ENCODE measurements at regions of chrX and their contacts with region 1.

Region 1: DNA sequence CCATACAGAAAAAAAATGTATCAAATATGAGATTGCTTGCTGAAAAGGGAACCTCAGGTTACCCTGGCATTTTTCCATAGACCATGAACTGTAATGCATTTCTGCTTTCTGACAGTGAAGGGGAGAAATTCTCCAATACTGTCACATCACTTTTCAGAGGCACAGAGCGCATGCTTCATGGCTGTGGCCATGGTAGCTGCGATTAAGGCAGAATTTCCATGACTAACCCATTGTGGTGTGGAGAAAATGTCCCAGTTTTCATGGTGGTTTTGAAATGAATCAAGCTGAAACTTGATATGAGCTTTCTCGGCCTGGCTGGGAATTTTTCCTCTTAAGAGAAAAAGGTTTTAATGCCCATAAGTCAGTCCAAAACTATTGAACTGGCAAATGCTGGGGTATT is 39.5 kb upstream of the MAP3K15 start:
- DNase-seq: peak; percentile 59
- H3K4me3 Mint-ChIP-seq: no peak overlapping the region
- H3K27ac Mint-ChIP-seq: peak overlapping the region; percentile 73
- H3K4me1 Mint-ChIP-seq: peaks cover 62% of the 10 kb centered on the region
- H3K27me3 Mint-ChIP-seq: no peaks in the 10 kb centered on the region

Region 2: GRCh38 chrX:19566359-19567222 is 11.8 kb after region 1 on chrX:
- CTCF ChIA-PET with region 1: interaction called, 4 read pairs
- POLR2A ChIA-PET with region 1: interaction called, 6 read pairs
- intact Hi-C with region 1: loop called (anchors 1 kb)
- DNase-seq: peak; percentile 63
- H3K4me3 Mint-ChIP-seq: peak overlapping the region; percentile 24
- H3K27ac Mint-ChIP-seq: peak overlapping the region; percentile 93
- H3K4me1 Mint-ChIP-seq: peaks cover 68% of the 10 kb centered on the region
- H3K27me3 Mint-ChIP-seq: no peaks in the 10 kb centered on the region

Region 3: DNA sequence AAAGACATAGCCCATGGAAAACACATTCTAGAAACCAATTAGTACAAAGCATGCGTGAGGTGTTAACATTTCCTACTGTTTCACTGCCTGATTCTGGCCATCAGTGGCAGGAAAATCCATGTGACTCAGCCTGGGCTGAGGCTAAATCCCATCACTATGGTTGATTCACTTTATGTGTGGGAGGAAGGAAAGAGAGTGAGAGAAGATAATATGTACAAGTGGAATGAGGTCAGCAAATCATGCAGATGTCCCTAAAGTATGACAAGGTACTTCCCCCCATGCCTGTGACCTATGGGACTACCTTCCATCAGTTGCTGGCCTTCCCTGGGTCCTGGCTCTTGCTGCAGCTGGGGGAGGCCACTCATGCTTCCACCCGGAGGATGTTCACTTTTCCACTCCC is 24.7 kb after region 1 on chrX:
- CTCF ChIA-PET with region 1: no interaction called
- POLR2A ChIA-PET with region 1: no interaction called
- intact Hi-C with region 1: loop called (anchors 1 kb)
- DNase-seq: peak; percentile 22
- H3K4me3 Mint-ChIP-seq: no peak overlapping the region
- H3K27ac Mint-ChIP-seq: peak overlapping the region; percentile 65
- H3K4me1 Mint-ChIP-seq: peaks cover 27% of the 10 kb centered on the region
- H3K27me3 Mint-ChIP-seq: no peaks in the 10 kb centered on the region

Region 4: DNA sequence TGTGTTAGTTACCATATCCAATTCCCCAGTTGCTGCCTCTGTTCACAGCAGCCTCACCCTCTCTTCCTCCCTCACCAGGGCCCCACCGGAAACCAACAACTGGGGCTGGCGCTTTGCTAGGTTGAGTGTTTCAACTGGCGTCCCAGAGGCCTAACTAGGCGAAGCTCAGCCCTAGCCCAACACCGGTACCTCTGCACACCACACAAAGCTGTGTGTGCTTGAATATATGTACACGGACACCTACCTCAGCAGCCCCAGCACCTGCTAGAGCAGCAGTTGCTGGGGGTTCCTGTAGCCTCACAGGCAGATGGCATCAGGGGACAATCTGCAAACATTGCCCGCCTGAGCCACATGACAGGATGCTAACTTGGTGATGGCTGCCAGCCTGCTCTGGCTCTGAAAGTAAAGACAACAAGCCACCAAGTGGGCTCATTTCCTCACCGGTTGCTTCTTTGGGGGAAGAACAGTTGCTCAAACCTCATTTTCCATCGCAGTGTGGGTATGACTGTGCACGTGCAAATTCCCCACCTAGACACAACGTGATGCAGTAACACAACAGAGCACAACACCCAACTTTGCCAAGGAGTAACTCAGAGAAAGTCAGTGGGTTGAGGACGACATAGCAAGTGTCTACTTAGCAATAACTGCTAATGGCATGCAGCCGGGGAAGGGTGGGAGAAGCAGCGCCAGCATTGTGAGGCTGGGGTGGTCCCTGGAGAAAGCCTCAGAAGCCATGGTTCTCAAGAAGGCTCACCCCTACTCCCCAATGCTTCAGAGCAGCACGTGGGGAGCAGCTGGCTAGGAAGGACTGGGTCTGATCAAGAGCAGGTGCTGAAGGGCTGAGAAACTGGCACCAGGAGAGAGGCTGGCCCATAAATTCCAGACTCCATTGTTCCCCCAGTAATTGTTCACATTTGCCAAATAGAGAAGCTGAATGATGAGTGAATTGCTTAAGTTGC is 193.1 kb after region 1 on chrX:
- CTCF ChIA-PET with region 1: no interaction called
- POLR2A ChIA-PET with region 1: interaction called, 3 read pairs
- intact Hi-C with region 1: loop called (anchors 2 kb)
- DNase-seq: peak; percentile 85
- H3K4me3 Mint-ChIP-seq: peak overlapping the region; percentile 64
- H3K27ac Mint-ChIP-seq: peak overlapping the region; percentile 97
- H3K4me1 Mint-ChIP-seq: peaks cover 91% of the 10 kb centered on the region
- H3K27me3 Mint-ChIP-seq: no peaks in the 10 kb centered on the region

Region 5: DNA sequence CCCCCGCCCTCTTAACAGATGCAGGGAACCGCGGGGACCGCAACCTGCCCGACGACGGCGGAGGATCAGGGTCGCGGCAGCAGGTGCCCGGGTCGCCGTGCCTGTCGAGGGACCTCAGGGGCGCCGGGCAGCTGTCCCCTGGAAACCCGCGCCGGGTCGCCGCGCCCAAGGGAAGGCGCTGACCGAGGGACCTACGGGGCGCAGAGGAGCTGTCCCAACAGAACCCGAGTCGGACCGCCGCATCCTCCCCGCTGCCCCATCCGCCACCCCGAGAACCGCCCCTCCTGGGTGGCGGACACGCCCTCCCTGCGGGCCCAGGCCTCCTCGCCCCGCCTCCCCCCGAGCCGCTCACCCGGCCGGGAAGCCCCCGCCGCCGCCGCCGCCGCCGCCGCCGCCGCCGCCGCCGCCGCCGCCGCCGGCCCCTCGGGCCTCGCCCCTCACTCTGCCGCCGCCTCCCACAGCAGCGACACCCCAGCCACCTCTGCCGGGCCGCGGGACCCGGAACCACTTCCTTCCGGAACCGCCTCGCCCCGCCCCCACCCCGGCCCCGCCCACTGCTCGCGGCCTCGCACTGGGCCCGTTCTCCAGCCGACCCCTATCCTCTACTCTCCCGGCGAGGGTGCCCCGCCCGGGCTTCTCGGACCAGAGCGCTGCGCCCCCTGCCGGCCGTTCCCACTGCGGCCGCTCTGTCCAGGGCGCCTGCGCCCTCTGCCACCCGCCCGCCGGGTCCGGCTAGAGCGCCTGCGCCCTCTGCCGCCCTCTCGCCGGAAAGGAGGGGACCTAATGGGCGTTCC is 436.0 kb after region 1 on chrX and contains the start of gene BCLAF3:
- CTCF ChIA-PET with region 1: no interaction called
- POLR2A ChIA-PET with region 1: no interaction called
- intact Hi-C with region 1: loop called (anchors 2 kb)
- DNase-seq: peak; percentile 92
- H3K4me3 Mint-ChIP-seq: peak within 1 kb of the TSS; percentile 87
- H3K27ac Mint-ChIP-seq: peak within 1 kb of the TSS; percentile 87
- H3K4me1 Mint-ChIP-seq: peaks cover 10% of the 10 kb centered on the region
- H3K27me3 Mint-ChIP-seq: no peaks in the 10 kb centered on the region
- total RNA-seq, gene BCLAF3: 4.0 to 4.1 TPM

Measured in activated CD4-positive, alpha-beta memory T cell treated with anti-CD3 and anti-CD28 coated beads for 36 hours (primary cell).